Posterior cingulate gyrus (tissue), 11 donors: ENCODE measurements at regions of chr16 and their contacts with region 1.

Region 1: GRCh38 chr16:19067349-19068236 is at the start of gene COQ7:
- DNase-seq: peak; percentile 93 to 99 (median 97)

Region 2: GRCh38 chr16:18983565-18984424 is 83.8 kb before region 1 on chr16 and contains the start of gene TMC7:
- intact Hi-C with region 1: loop called (anchors 2 kb)
- DNase-seq: peak; percentile 82 to 99 (median 94)

Region 3: DNA sequence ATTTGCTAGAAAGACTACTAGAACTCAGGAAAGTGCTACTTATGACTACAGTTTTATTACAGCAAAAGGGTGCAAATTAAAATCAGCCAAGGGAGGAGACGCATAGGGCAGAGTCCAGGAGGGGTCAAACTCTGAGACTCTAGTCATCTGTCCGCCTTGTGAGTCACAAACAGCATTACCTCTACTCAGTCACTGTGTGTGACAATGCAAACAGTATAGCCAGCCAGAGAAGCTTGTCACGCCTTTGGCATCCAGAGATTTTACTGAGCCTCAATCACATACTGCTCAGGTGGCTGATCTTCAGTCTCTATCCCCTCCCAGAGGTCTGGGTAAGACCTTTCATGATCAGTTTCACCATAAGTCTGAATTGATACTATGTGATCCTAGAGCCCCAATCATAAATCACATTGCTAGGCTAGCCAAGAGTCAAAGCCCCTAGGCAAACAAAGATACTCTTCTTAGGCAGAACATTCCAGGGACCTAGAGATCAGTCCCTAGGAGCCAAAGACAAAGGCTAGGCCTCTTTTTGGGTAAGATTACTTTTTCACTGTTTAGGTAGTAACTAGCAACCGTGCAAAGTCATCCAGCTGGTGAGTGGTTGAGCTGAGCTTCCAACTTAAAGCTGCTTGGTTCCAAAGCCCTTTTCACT is 169.1 kb after region 1 on chr16:
- intact Hi-C with region 1: no loop called
- DNase-seq: no peak